ENCODE measurements at regions of chr13 and their contacts with region 1.

Region 1: GRCh38 chr13:99033814-99034213 is 56.0 kb upstream of the DOCK9 start:
- DNase-seq: peak; percentile 16
- H3K4me3 ChIP-seq: no peak overlapping the region
- H3K27ac ChIP-seq: no peak overlapping the region
- H3K4me1 ChIP-seq: peaks cover 17% of the 10 kb centered on the region
- H3K27me3 ChIP-seq: no peaks in the 10 kb centered on the region
- CTCF ChIP-seq: peak; percentile 60 to 66

Region 2: DNA sequence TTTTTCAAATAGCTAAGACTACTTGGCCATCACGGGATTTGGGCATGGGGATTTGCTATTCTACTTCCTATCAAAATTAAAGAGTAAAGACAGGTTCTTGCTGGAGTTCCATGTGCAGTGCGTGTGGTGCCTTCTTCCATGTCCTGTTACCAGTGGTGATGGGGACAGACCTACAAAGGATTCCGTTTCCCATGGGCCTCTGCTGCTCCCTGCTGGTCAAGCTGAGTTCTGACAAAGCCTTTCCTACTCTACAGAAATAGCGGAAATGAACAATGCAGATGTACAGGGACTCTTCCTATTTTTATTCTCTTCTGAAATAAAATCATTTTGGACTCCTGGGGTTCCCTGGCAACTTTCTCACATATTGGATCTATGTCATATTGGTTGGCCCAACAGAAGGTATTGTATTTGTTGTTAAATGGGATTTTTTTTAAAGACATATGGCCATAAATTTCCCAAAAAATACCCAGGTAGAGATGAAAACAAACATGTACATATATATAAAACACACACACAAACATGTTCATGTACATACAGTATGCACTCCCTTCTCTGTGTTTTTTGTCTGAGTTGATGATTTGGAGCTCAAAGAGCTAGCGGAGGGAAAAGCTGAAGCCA is 190.8 kb before region 1 on chr13:
- CTCF ChIA-PET with region 1: interaction called, 10 read pairs
- dilution Hi-C with region 1: no loop called
- in situ Hi-C with region 1: no loop called
- intact Hi-C with region 1: loop called (anchors 1 kb)
- DNase-seq: peak; percentile 48
- H3K4me3 ChIP-seq: no peak overlapping the region
- H3K27ac ChIP-seq: no peak overlapping the region
- H3K4me1 ChIP-seq: peaks cover 6% of the 10 kb centered on the region
- H3K27me3 ChIP-seq: no peaks in the 10 kb centered on the region
- CTCF ChIP-seq: peak; percentile 88 to 91

Region 3: DNA sequence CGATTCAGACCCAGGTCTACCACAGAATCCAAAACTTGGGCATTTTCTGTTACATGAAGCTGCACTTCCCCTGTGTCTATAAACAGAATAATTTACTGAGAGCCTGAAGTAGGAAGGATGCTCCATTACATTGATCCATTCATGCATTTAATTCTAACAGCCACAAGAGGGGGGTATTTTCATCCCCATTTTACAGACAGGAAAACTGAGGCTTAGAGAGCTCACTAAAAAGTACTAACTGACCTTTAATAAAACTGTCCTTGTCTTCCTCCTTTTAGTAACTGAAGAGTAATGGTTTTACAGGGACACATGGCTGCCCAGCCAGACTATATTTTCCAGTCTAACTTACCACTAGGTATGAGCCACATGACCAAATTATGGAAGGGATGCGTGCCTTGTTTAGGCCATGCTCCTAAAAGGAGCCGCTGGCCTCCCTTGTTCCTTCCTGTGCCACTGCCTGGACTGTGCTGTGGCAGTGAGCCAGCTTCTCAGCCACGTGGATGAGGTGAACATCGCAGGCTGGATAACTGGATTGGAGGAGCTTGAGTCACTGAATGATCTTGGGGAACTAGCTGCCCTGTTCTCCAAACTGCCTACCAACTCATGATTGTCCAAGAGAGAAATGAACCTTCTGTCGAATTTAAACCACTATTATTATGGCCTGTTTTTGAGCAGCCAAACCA is 164.3 kb before region 1 on chr13:
- CTCF ChIA-PET with region 1: no interaction called
- dilution Hi-C with region 1: no loop called
- in situ Hi-C with region 1: no loop called
- intact Hi-C with region 1: loop called (anchors 1 kb)
- DNase-seq: peak; percentile 6
- H3K4me3 ChIP-seq: no peak overlapping the region
- H3K27ac ChIP-seq: no peak overlapping the region
- H3K4me1 ChIP-seq: no peaks in the 10 kb centered on the region
- H3K27me3 ChIP-seq: no peaks in the 10 kb centered on the region
- CTCF ChIP-seq: peak; percentile 17 to 20

Region 4: DNA sequence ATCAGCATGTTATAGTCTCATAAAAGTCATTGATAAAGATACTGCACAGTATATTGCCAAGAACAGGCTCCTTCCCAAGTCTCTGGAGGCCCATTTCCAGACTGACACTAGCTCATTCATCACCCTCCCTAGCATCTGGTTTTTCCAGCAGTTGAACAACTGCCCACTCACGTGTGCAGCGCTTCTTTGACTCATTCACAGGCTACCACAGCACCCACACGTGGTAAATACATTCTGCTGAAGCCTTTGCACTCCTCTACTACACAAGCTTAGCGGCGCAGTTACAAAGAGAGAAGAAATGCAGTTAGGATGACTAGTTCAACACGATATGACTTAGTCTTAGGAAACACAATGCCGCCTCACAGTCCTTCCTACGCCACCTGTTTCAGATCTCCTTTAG is 143.6 kb before region 1 on chr13:
- CTCF ChIA-PET with region 1: interaction called, 4 read pairs
- dilution Hi-C with region 1: no loop called
- in situ Hi-C with region 1: loop called in 1 of 2 experiments (anchors 10 kb)
- intact Hi-C with region 1: loop called (anchors 2 kb)
- DNase-seq: peak; percentile 86
- H3K4me3 ChIP-seq: no peak overlapping the region
- H3K27ac ChIP-seq: peak overlapping the region; percentile 43
- H3K4me1 ChIP-seq: peaks cover 21% of the 10 kb centered on the region
- H3K27me3 ChIP-seq: no peaks in the 10 kb centered on the region
- CTCF ChIP-seq: no peak